ENCODE measurements at regions of chr6 and their contacts with region 1.

Region 1: GRCh38 chr6:79869600-79870084 is 77.7 kb downstream of the ELOVL4 start:
- DNase-seq: peak; percentile 64
- H3K4me3 ChIP-seq: no peak overlapping the region
- H3K27ac ChIP-seq: no peak overlapping the region
- H3K4me1 ChIP-seq: peaks cover 38% of the 10 kb centered on the region
- H3K27me3 ChIP-seq: no peaks in the 10 kb centered on the region
- CTCF ChIP-seq: peak; percentile 83 to 92

Region 2: GRCh38 chr6:79570129-79571029 is 299.3 kb before region 1 on chr6:
- CTCF ChIA-PET with region 1: no interaction called
- dilution Hi-C with region 1: no loop called
- in situ Hi-C with region 1: no loop called
- intact Hi-C with region 1: loop called (anchors 1 kb)
- DNase-seq: peak; percentile 73
- H3K4me3 ChIP-seq: peak overlapping the region in 2 of 3 experiments; percentile 24 to 36
- H3K27ac ChIP-seq: no peak overlapping the region
- H3K4me1 ChIP-seq: peaks cover 17% of the 10 kb centered on the region
- H3K27me3 ChIP-seq: no peaks in the 10 kb centered on the region
- CTCF ChIP-seq: peak; percentile 52 to 71

Region 3: GRCh38 chr6:79719248-79719960 is 150.2 kb before region 1 on chr6:
- CTCF ChIA-PET with region 1: no interaction called
- dilution Hi-C with region 1: no loop called
- in situ Hi-C with region 1: no loop called
- intact Hi-C with region 1: no loop called
- DNase-seq: peak; percentile 6
- H3K4me3 ChIP-seq: no peak overlapping the region
- H3K27ac ChIP-seq: no peak overlapping the region
- H3K4me1 ChIP-seq: no peaks in the 10 kb centered on the region
- H3K27me3 ChIP-seq: no peaks in the 10 kb centered on the region
- CTCF ChIP-seq: no peak

Region 4: GRCh38 chr6:79777713-79778579 is 91.7 kb before region 1 on chr6:
- CTCF ChIA-PET with region 1: interaction called, 9 read pairs
- dilution Hi-C with region 1: no loop called
- in situ Hi-C with region 1: no loop called
- intact Hi-C with region 1: loop called (anchors 1 kb)
- DNase-seq: peak; percentile 70
- H3K4me3 ChIP-seq: peak overlapping the region; percentile 20 to 26 (median 23)
- H3K27ac ChIP-seq: no peak overlapping the region
- H3K4me1 ChIP-seq: no peaks in the 10 kb centered on the region
- H3K27me3 ChIP-seq: no peaks in the 10 kb centered on the region
- CTCF ChIP-seq: peak; percentile 95 to 97

Region 5: GRCh38 chr6:79813854-79814709 is 55.6 kb before region 1 on chr6:
- CTCF ChIA-PET with region 1: no interaction called
- dilution Hi-C with region 1: no loop called
- in situ Hi-C with region 1: no loop called
- intact Hi-C with region 1: loop called (anchors 2 kb)
- DNase-seq: peak; percentile 40
- H3K4me3 ChIP-seq: no peak overlapping the region
- H3K27ac ChIP-seq: no peak overlapping the region
- H3K4me1 ChIP-seq: no peaks in the 10 kb centered on the region
- H3K27me3 ChIP-seq: no peaks in the 10 kb centered on the region
- CTCF ChIP-seq: peak; percentile 87 to 88

Region 6: GRCh38 chr6:79949233-79949632 is 79.6 kb after region 1 on chr6:
- CTCF ChIA-PET with region 1: interaction called, 3 read pairs
- dilution Hi-C with region 1: no loop called
- in situ Hi-C with region 1: no loop called
- intact Hi-C with region 1: loop called (anchors 2 kb)
- DNase-seq: peak; percentile 56
- H3K4me3 ChIP-seq: no peak overlapping the region
- H3K27ac ChIP-seq: no peak overlapping the region
- H3K4me1 ChIP-seq: peaks cover 18% of the 10 kb centered on the region
- H3K27me3 ChIP-seq: no peaks in the 10 kb centered on the region
- CTCF ChIP-seq: peak; percentile 23 to 51

Region 7: DNA sequence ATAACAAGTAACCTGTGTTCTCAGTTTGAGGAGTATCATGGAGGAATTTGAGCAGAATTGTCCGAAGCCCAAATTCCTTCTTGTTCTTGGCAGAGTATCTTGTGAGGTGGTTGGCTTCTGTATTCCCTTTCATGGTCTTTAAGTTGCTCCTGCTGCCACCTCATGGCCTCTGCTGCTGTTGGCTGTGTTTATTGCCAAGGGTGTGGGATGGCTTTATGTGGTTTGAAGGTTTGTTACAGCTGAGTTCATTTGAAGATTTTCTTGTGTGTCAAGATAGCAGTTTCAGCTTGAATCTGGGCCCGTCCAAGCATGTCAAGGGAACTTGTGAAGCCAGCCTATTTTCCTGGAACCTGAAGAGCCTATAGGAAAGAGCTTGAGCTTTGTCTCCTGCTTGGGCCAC is 114.6 kb after region 1 on chr6:
- CTCF ChIA-PET with region 1: interaction called, 3 read pairs
- dilution Hi-C with region 1: no loop called
- in situ Hi-C with region 1: no loop called
- intact Hi-C with region 1: loop called (anchors 1 kb)
- DNase-seq: peak; percentile 71
- H3K4me3 ChIP-seq: no peak overlapping the region
- H3K27ac ChIP-seq: no peak overlapping the region
- H3K4me1 ChIP-seq: peaks cover 4% of the 10 kb centered on the region
- H3K27me3 ChIP-seq: no peaks in the 10 kb centered on the region
- CTCF ChIP-seq: peak; percentile 17 to 60